Caco-2 (cell line): ENCODE measurements at regions of chr21 and their contacts with region 1.

Region 1: GRCh38 chr21:32994305-32994704 is 31.4 kb upstream of the OLIG2 start:
- DNase-seq: peak in 1 of 2 experiments; percentile 23
- H3K4me3 ChIP-seq: no peak overlapping the region
- H3K4me3 Mint-ChIP-seq: no peak overlapping the region
- H3K27ac Mint-ChIP-seq: no peak overlapping the region
- H3K4me1 ChIP-seq: no peaks in the 10 kb centered on the region
- H3K4me1 Mint-ChIP-seq: no peaks in the 10 kb centered on the region
- H3K27me3 ChIP-seq: peaks cover 2% of the 10 kb centered on the region; the same call in 1 of the 2 replicates
- H3K27me3 Mint-ChIP-seq: peaks cover 24% of the 10 kb centered on the region
- CTCF ChIP-seq: peak; percentile 45 to 55

Region 2: DNA sequence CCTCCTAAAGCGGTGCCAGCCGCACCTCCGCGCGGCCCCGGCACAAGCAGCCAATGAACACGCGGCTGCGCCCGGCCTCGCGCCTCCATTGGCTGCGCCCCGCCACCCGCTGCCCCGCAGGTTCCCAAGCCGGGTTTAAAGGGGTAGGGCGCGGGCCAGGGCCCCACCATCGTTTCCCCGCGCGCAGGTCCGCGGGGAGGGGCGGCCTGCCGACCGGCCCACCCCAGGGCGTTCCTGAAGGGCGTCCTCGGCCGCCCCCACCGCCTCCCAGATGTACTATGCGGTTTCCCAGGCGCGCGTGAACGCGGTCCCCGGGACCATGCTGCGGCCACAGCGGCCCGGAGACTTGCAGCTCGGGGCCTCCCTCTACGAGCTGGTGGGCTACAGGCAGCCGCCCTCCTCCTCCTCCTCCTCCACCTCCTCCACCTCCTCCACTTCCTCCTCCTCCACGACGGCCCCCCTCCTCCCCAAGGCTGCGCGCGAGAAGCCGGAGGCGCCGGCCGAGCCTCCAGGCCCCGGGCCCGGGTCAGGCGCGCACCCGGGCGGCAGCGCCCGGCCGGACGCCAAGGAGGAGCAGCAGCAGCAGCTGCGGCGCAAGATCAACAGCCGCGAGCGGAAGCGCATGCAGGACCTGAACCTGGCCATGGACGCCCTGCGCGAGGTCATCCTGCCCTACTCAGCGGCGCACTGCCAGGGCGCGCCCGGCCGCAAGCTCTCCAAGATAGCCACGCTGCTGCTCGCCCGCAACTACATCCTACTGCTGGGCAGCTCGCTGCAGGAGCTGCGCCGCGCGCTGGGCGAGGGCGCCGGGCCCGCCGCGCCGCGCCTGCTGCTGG is 75.9 kb after region 1 on chr21 and contains the start of gene OLIG1:
- CTCF ChIA-PET with region 1: no interaction called
- POLR2A ChIA-PET with region 1: no interaction called
- intact Hi-C with region 1: loop called (anchors 5 kb)
- DNase-seq: no peak
- H3K4me3 ChIP-seq: peak within 1 kb of the TSS; percentile 17
- H3K4me3 Mint-ChIP-seq: peak within 1 kb of the TSS; percentile 74
- H3K27ac Mint-ChIP-seq: no peak within 1 kb of the TSS
- H3K4me1 ChIP-seq: peaks cover 3% of the 10 kb centered on the region; the same call in 1 of the 2 replicates
- H3K4me1 Mint-ChIP-seq: no peaks in the 10 kb centered on the region
- H3K27me3 ChIP-seq: no peaks in the 10 kb centered on the region; the same call in 1 of the 2 replicates
- H3K27me3 Mint-ChIP-seq: peaks cover 23% of the 10 kb centered on the region
- CTCF ChIP-seq: no peak
- total RNA-seq, gene OLIG1: not detected in 2 replicates

Region 3: GRCh38 chr21:33127154-33127893 is 133.0 kb after region 1 on chr21:
- CTCF ChIA-PET with region 1: interaction called, 8 read pairs
- POLR2A ChIA-PET with region 1: no interaction called
- intact Hi-C with region 1: loop called (anchors 1 kb)
- DNase-seq: peak; percentile 56 to 69
- H3K4me3 ChIP-seq: no peak overlapping the region
- H3K4me3 Mint-ChIP-seq: no peak overlapping the region
- H3K27ac Mint-ChIP-seq: no peak overlapping the region
- H3K4me1 ChIP-seq: peaks cover 10% of the 10 kb centered on the region; the same call in 1 of the 2 replicates
- H3K4me1 Mint-ChIP-seq: peaks cover 10% of the 10 kb centered on the region
- H3K27me3 ChIP-seq: no peaks in the 10 kb centered on the region; the same call in 1 of the 2 replicates
- H3K27me3 Mint-ChIP-seq: peaks cover 16% of the 10 kb centered on the region
- CTCF ChIP-seq: peak; percentile 52 to 77